Activated T-helper 1 cell treated with anti-CD3 and anti-CD28 coated beads, Interleukin-12 subunit alpha, Interleukin-12 subunit beta, Interleukin-2, Interleukin-4 antibody, amounts not matched to agents 30 ng/mL and 10 ng/mL and 1 ng/mL, durations not matched to agents 14 hours and 24 hours and 36 hours (primary cell): ENCODE measurements at regions of chr14 and their contacts with region 1.

Region 1: GRCh38 chr14:20343092-20343861 is at the start of gene PARP2:
- DNase-seq: peak; percentile 92
- H3K4me3 Mint-ChIP-seq: peak within 1 kb of the TSS; percentile 95
- H3K27ac Mint-ChIP-seq: peak within 1 kb of the TSS; percentile 96
- H3K4me1 Mint-ChIP-seq: peaks cover 19% of the 10 kb centered on the region
- H3K27me3 Mint-ChIP-seq: peaks cover 6% of the 10 kb centered on the region
- total RNA-seq, gene PARP2: 32.5 and 36.6 TPM in 2 replicates

Region 2: DNA sequence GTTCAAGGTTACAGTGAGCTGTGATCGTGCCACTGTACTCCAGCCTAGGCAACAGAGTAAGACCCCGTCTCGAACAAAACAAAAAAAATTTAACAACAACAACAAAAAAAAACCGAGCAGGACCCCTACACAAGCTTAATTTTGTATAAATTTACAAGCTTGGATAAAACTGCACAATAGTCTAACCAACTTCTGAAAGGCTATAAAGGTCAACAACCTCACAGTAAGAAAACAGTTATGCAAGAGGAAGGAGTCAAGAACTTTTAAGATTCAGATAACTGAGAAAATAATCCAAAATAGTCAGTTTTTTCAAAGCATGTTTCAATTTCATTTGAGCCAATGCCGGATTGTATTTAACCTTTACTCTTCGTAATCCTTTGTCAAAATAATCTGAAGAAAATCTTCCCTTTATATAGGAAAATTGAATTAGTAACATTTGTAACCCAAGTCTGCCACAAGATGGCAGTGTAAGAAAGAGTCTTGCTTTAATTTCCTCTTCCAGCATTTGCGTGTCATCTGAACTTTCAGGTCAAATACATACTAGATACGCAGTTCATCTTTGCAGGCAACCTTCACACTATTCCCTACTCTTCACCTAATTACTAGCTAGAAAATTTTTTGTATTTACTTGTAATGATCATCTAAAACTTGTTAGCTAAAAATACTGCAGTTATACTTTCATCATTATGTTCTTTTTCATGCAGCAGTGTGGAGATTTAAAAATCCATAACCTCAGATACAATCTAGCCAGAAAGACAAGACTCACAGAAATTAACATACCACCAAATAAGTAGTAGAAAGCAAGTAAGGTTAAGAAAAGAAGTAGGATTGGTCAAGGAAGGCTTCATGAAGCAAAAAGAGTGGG is 16.0 kb before region 1 on chr14:
- intact Hi-C with region 1: loop called (anchors 2 kb)
- DNase-seq: peak; percentile 22
- H3K4me3 Mint-ChIP-seq: peak overlapping the region; percentile 9
- H3K27ac Mint-ChIP-seq: peak overlapping the region; percentile 13
- H3K4me1 Mint-ChIP-seq: peaks cover 52% of the 10 kb centered on the region
- H3K27me3 Mint-ChIP-seq: no peaks in the 10 kb centered on the region

Region 3: GRCh38 chr14:20400965-20401593 is 57.8 kb after region 1 on chr14:
- intact Hi-C with region 1: loop called (anchors 1 kb)
- DNase-seq: no peak
- H3K4me3 Mint-ChIP-seq: peak overlapping the region; percentile 53
- H3K27ac Mint-ChIP-seq: peak overlapping the region; percentile 86
- H3K4me1 Mint-ChIP-seq: peaks cover 30% of the 10 kb centered on the region
- H3K27me3 Mint-ChIP-seq: no peaks in the 10 kb centered on the region

Region 4: DNA sequence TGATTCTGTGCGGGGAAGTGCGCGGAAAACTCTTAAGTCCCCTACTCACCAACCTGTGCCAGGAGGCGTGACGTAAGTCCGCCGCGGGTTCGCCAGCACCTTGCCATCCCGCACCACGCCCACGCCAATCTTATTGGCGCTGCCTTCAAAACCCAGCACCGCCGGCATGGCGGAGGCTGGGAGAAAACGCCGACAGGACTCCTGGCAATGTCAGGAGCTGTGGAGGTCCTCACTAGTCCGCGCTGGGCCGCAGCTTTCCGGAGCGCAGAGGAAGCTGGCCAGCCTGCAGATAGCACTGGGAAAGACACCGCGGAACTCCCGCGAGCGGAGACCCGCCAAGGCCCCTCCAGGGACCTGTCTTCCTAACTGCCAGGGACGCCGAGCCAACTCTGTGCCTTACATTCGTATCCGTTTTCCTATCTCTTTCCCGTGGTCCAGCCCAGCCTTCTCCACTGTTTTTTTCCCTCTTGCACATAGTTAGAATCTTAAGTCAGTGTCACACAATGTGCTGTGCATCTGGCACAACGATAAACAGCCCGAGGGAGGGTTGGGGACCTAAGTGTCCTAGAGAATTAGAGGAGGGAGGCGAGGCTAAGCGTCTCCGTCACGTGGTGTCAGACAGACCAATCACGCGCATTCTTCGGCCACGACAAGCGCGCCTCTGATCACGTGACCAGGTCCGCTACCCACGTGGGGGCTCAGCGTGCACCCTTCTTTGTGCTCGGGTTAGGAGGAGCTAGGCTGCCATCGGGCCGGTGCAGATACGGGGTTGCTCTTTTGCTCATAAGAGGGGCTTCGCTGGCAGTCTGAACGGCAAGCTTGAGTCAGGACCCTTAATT is 111.5 kb after region 1 on chr14 and contains the starts of genes APEX1 and OSGEP:
- intact Hi-C with region 1: loop called (anchors 1 kb)
- DNase-seq: peak; percentile 97
- H3K4me3 Mint-ChIP-seq: peak within 1 kb of the TSS; percentile 53
- H3K27ac Mint-ChIP-seq: no peak within 1 kb of the TSS
- H3K4me1 Mint-ChIP-seq: peaks cover 11% of the 10 kb centered on the region
- H3K27me3 Mint-ChIP-seq: no peaks in the 10 kb centered on the region
- total RNA-seq, gene APEX1: 236 and 242 TPM in 2 replicates
- total RNA-seq, gene OSGEP: 69.6 and 77.4 TPM in 2 replicates

Region 5: DNA sequence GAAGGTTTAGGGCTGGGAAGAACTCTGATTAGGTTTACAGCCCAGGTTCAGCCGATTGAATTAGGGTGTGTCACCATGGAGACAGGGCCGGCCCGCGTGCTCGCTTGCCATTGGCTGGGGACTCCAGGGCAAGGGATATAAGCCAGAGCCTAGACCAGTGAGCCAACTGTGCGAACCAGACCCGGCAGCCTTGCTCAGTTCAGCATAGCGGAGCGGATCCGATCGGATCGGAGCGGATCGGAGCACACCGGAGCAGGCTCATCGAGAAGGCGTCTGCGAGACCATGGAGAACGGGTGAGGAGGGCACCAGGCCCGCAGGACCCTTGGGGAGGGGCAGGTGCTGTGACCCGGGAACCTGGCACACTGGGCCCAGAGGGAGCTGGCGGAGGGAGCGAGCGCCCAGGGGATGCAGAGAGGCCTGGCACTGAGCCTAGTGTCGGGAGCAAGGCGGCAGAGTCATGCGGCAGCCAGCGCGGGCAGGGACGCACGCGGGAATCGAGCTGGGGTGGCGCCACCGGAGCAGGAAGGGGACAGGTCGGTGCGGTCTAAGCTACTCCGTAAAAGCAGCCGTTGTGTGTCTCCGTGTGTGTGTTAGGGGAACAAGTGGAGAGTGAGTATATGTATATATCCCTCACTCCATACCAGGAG is 126.1 kb after region 1 on chr14 and contains the start of gene PNP:
- intact Hi-C with region 1: loop called (anchors 1 kb)
- DNase-seq: peak; percentile 85
- H3K4me3 Mint-ChIP-seq: peak within 1 kb of the TSS; percentile 95
- H3K27ac Mint-ChIP-seq: peak within 1 kb of the TSS; percentile 96
- H3K4me1 Mint-ChIP-seq: peaks cover 40% of the 10 kb centered on the region
- H3K27me3 Mint-ChIP-seq: peaks cover 3% of the 10 kb centered on the region
- total RNA-seq, gene PNP: 149 TPM in 2 replicates